Thyroid gland (tissue), 4 donors: ENCODE measurements at regions of chr11 and their contacts with region 1.

Region 1: GRCh38 chr11:72924568-72925190 is 110.5 kb downstream of the ATG16L2 start:
- DNase-seq: no peak
- H3K4me3 ChIP-seq: no peak overlapping the region
- H3K27ac ChIP-seq: no peak overlapping the region
- H3K4me1 ChIP-seq: peaks cover 0 to 2% of the 10 kb centered on the region in 2 donors
- H3K27me3 ChIP-seq: no peaks in the 10 kb centered on the region
- CTCF ChIP-seq: peak in 4 of 6 experiments; percentile 21 to 44 (median 42)
- POLR2A ChIP-seq: no peak

Region 2: DNA sequence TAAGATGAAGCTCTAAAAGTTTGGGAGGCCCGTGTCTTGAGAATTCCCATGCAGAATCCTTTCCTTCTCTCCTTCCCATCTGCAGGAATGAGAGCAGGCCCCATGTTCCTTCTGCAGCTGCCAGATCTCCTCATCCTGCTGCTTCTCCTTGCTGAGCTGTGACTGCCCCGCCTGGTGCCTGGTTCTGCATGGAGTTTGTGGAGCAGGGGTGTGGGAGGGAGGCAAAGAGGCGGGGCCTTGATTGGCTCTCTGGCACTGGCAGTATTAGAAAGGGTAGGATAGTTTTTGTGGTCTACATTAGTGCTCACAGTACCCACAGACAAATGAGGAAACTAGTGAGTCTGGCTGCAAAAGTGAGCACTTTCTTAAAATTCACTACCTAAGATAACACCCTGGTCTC is 399.2 kb before region 1 on chr11:
- intact Hi-C with region 1: no loop called
- DNase-seq: peak in 1 of 2 donors; percentile 23
- H3K4me3 ChIP-seq: no peak overlapping the region
- H3K27ac ChIP-seq: no peak overlapping the region
- H3K4me1 ChIP-seq: peaks cover 0 to 1% of the 10 kb centered on the region in 2 donors
- H3K27me3 ChIP-seq: no peaks in the 10 kb centered on the region
- CTCF ChIP-seq: no peak
- POLR2A ChIP-seq: no peak

Region 3: GRCh38 chr11:72799441-72799840 is 125.2 kb before region 1 on chr11:
- intact Hi-C with region 1: no loop called
- DNase-seq: no peak
- H3K4me3 ChIP-seq: no peak overlapping the region
- H3K27ac ChIP-seq: no peak overlapping the region
- H3K4me1 ChIP-seq: peaks cover 1 to 4% of the 10 kb centered on the region in 2 donors
- H3K27me3 ChIP-seq: no peaks in the 10 kb centered on the region
- CTCF ChIP-seq: no peak
- POLR2A ChIP-seq: no peak

Region 4: GRCh38 chr11:72989727-72990126 is 65.0 kb after region 1 on chr11:
- intact Hi-C with region 1: no loop called
- DNase-seq: no peak
- H3K4me3 ChIP-seq: no peak overlapping the region
- H3K27ac ChIP-seq: no peak overlapping the region
- H3K4me1 ChIP-seq: no peaks in the 10 kb centered on the region
- H3K27me3 ChIP-seq: no peaks in the 10 kb centered on the region
- CTCF ChIP-seq: no peak
- POLR2A ChIP-seq: no peak

Region 5: DNA sequence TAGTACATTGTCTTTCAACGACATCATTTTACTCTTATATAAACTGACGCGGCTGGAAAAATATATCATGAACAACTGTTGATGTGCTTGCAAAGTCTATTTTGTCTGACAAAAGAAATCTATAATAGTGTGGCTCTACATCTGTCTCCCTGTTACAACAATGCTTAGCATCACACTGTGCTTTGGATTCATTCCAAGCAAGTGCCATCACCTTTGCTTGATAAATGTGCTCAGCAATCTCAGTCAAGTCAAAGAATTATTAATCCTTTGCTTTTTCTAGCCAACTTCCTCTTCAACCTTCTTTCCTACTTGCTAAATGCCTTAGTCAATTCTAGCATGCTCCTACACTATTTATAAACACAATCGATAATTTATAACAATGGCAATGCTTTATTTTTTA is 76.9 kb after region 1 on chr11:
- intact Hi-C with region 1: no loop called
- DNase-seq: no peak
- H3K4me3 ChIP-seq: no peak overlapping the region
- H3K27ac ChIP-seq: no peak overlapping the region
- H3K4me1 ChIP-seq: no peaks in the 10 kb centered on the region
- H3K27me3 ChIP-seq: no peaks in the 10 kb centered on the region
- CTCF ChIP-seq: no peak
- POLR2A ChIP-seq: no peak

Region 6: DNA sequence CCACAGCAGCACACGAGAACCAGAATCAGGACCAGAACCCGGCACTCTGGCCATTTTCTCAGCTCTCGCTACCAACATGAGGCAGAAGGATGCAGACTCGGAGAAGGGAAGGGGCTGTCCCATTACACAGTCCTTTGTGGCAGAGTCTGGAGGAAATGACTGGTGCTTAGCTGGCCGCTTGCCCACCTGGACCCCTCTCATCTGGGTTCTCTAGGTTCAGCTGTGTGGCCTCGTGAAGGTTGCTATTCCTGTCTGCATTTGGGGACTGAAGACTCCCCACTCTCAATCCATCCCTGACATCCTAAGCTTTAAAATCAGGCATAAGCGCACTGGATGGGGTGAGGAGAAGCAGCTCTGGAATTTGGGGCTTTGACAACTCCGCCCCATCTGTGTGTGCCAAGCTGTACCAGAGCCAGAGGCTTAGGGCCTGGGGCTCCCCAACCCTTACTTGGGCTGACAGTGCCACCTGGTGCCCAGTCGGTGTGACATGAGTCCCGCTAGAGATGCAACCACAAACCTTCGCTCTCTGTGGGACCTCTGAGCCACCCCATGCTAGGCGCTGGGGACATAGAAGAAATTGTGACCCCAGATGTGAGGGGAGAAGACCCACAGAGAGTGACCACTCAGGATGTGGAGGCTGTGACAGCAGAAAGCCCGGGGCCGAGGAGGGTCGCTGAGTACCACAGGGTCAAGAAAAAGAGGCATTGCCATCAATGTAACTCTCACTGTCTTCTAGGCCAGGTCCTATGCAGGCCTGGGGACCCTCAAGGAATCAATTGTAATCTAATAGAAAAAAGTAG is 253.3 kb after region 1 on chr11:
- intact Hi-C with region 1: loop called (anchors 10 kb)
- DNase-seq: peak; percentile 83 to 87
- H3K4me3 ChIP-seq: no peak overlapping the region
- H3K27ac ChIP-seq: peak overlapping the region in 2 of 3 donors; percentile 20 to 50
- H3K4me1 ChIP-seq: peaks cover 9 to 30% of the 10 kb centered on the region in 2 donors
- H3K27me3 ChIP-seq: no peaks in the 10 kb centered on the region
- CTCF ChIP-seq: peak; percentile 43 to 96 (median 83)
- POLR2A ChIP-seq: no peak